H1 (cell line): ENCODE measurements at regions of chr21 and their contacts with region 1.

Region 1: DNA sequence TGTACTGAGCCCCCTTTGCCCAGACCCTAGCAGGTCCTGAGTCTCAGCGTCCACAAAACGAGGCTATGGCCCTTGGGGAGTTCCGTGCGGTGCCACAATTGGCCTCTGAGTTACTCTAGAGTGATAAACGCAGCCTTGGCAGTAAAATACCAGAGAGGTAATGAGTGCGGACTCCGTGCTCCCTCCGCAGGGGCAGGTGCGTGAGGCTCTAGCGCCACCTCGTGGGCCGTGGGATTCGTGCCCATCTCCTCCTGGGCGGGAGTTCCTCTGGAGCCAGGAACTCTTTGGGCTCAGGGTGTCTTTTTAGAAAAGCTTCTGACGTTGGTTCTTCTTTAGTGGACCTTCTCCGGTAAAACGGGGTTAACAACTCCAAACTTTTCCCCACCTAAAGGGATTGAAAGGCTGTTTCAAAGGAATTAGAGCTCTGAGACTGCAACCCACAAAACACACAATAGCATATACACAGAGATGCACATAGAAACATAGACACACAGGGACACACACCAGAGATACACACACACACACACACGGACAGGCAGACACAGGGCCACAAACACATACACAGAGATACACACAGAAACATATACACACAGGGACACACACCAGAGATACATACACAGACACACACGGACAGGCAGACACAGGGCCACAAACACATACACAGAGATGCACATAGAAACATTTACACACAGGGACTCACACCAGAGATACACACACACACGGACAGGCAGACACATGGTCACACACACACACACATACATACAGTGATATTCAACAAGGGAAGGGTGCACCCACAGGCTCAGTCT is 99.4 kb downstream of the KCNJ15 start:
- DNase-seq: peak; percentile 34 to 93
- H3K4me3 ChIP-seq: no peak overlapping the region
- H3K27ac ChIP-seq: no peak overlapping the region
- H3K4me1 ChIP-seq: peaks cover 0 to 11% (median 4%) of the 10 kb centered on the region in 4 experiments; a peak in 3 of 7 replicates
- H3K27me3 ChIP-seq: peaks cover 0 to 1% (median 0%) of the 10 kb centered on the region in 4 experiments; a peak in 3 of 7 replicates
- CTCF ChIP-seq: peak; percentile 91 to 98 (median 94)
- EP300 ChIP-seq: no peak
- POLR2A ChIP-seq: no peak
- RAD21 ChIP-seq: peak; percentile 99

Region 2: GRCh38 chr21:38159355-38159754 is 196.8 kb before region 1 on chr21:
- CTCF ChIA-PET with region 1: interaction called, 366 read pairs
- POLR2A ChIA-PET with region 1: no interaction called
- DNase-seq: peak; percentile 39 to 72
- H3K4me3 ChIP-seq: no peak overlapping the region
- H3K27ac ChIP-seq: no peak overlapping the region
- H3K4me1 ChIP-seq: no peaks in the 10 kb centered on the region
- H3K27me3 ChIP-seq: no peaks in the 10 kb centered on the region
- CTCF ChIP-seq: peak; percentile 66 to 88 (median 75)
- EP300 ChIP-seq: no peak
- POLR2A ChIP-seq: no peak
- RAD21 ChIP-seq: peak; percentile 81 to 88

Region 3: GRCh38 chr21:38181096-38181495 is 175.1 kb before region 1 on chr21:
- CTCF ChIA-PET with region 1: interaction called, 366 read pairs
- POLR2A ChIA-PET with region 1: no interaction called
- DNase-seq: no peak
- H3K4me3 ChIP-seq: no peak overlapping the region
- H3K27ac ChIP-seq: no peak overlapping the region
- H3K4me1 ChIP-seq: no peaks in the 10 kb centered on the region
- H3K27me3 ChIP-seq: no peaks in the 10 kb centered on the region
- CTCF ChIP-seq: no peak
- EP300 ChIP-seq: no peak
- POLR2A ChIP-seq: no peak
- RAD21 ChIP-seq: no peak

Region 4: GRCh38 chr21:38323721-38324531 is 32.3 kb before region 1 on chr21:
- CTCF ChIA-PET with region 1: interaction called, 34 read pairs
- POLR2A ChIA-PET with region 1: no interaction called
- DNase-seq: no peak
- H3K4me3 ChIP-seq: peak overlapping the region in 1 of 4 experiments; percentile 23; a peak in 1 of 8 replicates
- H3K27ac ChIP-seq: no peak overlapping the region
- H3K4me1 ChIP-seq: peaks cover 1 to 14% (median 9%) of the 10 kb centered on the region in 4 experiments; a peak in 6 of 7 replicates
- H3K27me3 ChIP-seq: no peaks in the 10 kb centered on the region
- CTCF ChIP-seq: no peak
- EP300 ChIP-seq: no peak
- POLR2A ChIP-seq: no peak
- RAD21 ChIP-seq: no peak

Region 5: DNA sequence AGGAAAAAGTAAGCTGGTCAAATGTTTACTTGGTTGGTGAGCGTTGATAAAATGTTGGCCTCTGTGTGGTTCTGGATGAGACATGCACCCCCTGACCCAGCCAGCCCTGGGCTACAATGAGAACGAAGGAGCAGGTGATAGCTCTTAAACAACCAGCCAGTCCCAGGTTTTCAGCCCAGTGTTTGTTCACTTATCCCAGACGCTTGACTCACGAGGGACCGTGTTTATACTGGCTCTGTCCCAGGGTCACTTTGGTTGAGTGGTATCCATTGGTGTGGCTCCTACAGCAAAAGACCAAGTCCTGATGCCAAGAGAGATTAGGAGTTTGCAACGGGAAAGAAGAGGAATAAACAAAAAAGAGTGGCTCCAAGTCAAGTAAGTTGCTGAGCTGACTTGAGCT is 12.5 kb before region 1 on chr21:
- CTCF ChIA-PET with region 1: interaction called, 18 read pairs
- POLR2A ChIA-PET with region 1: interaction called, 3 read pairs
- DNase-seq: no peak
- H3K4me3 ChIP-seq: no peak overlapping the region
- H3K27ac ChIP-seq: no peak overlapping the region
- H3K4me1 ChIP-seq: no peaks in the 10 kb centered on the region
- H3K27me3 ChIP-seq: no peaks in the 10 kb centered on the region
- CTCF ChIP-seq: no peak
- EP300 ChIP-seq: no peak
- POLR2A ChIP-seq: no peak
- RAD21 ChIP-seq: no peak

Region 6: GRCh38 chr21:38400195-38400919 is 44.2 kb after region 1 on chr21:
- CTCF ChIA-PET with region 1: interaction called, 11 read pairs
- POLR2A ChIA-PET with region 1: no interaction called
- DNase-seq: no peak
- H3K4me3 ChIP-seq: no peak overlapping the region
- H3K27ac ChIP-seq: no peak overlapping the region
- H3K4me1 ChIP-seq: peaks cover 0 to 8% (median 3%) of the 10 kb centered on the region in 4 experiments; a peak in 3 of 7 replicates
- H3K27me3 ChIP-seq: no peaks in the 10 kb centered on the region
- CTCF ChIP-seq: no peak
- EP300 ChIP-seq: no peak
- POLR2A ChIP-seq: no peak
- RAD21 ChIP-seq: no peak

Region 7: DNA sequence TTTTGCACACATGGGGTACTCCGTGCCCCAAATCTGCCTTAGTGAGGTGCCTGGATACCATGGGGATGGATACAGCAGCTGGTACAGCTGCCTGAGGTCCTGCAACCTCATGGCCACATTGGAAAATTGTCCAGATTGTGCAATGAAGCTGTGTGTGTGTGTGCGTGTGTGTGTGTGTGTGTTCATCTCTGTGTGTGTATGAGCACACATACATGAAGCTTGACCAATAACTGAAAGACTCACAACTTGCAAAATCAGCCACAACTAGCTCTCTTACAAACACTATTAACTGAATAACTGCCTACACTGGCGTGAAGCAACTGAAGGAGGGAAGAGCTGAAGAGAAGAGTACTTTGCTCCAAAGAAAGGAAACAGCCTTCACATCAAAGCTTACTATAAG is 63.9 kb after region 1 on chr21:
- CTCF ChIA-PET with region 1: no interaction called
- POLR2A ChIA-PET with region 1: no interaction called
- DNase-seq: no peak
- H3K4me3 ChIP-seq: no peak overlapping the region
- H3K27ac ChIP-seq: no peak overlapping the region
- H3K4me1 ChIP-seq: no peaks in the 10 kb centered on the region
- H3K27me3 ChIP-seq: peaks cover 0 to 2% (median 0%) of the 10 kb centered on the region in 4 experiments; a peak in 1 of 7 replicates
- CTCF ChIP-seq: no peak
- EP300 ChIP-seq: no peak
- POLR2A ChIP-seq: no peak
- RAD21 ChIP-seq: no peak